Left cardiac atrium (tissue), 4 donors: ENCODE measurements at regions of chr2 and their contacts with region 1.

Region 1: DNA sequence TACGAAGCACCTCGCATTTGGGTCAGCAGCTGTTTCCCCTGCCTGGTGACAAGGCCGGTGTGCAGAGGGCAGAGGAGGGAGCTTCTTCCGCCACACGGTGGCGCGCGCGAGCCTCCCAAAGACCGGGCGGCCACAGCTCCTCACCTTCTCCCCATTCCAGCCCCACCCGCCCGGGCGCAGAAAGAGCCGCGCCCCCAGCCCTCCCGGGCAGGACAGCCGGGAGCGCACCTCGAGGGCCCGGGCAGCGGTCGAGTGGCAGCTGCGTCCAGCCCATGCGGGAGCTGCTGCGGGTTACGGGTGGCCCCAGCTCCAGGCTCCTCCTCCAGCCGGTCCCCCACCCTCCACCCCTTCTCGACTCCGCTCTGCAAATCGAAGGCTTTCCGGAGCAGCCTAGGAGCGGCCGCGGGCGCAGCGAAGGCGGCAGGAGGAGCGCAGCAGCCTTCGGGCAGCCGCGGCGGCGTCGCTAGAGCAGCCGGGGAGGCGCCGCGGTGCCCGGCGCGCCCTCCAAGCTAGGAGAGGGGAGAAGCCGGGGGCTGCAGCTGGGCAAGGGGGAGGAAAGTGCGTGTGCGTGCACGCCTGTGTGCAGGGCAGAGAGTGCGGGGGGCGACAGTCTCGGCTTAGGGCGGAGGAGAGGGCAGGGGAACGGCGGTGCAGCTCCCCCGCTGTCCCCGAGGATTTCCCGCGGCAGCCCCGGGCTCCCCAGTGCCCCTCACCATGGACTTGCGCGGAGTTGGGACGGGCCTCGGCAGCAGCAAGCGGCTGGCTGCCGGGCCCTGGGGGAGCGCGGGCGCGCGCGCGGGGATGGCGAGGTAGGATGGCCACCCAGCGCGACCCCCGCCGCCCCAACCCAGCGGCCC is at the start of gene CCDC85A:
- DNase-seq: peak; percentile 85
- ATAC-seq: peak; percentile 95 to 96
- total RNA-seq, gene CCDC85A: 2.5 to 4.9 TPM

Region 2: DNA sequence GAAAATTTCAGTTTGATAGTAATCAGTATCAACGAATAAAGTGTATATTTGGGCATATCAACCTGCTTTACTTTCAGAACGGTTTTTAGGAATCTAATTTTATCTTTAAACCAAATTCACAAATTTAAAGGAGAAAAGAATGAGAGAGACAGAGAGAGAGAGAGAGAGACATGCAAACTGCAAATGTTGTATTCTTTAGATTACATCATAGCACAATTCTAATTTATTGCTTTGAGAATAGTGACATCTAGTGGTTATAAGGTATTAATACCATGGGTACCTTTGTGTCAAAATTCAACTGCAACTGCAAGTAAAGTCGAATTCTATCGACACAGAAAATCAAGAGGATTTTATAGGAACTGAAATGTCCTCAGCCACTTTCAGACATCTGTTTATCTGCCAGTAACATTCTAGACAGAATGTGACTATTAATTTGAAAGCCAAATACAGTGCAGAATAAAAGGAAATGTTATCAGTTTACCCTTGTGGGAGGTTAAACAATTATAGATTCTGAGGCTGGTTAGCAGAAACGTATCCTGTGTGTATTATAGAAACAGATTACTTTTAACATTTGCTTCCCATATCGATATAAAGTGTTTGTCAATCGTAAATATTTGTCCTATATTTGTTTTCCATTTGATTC is 1332.9 kb after region 1 on chr2:
- intact Hi-C with region 1: loop called (anchors 5 kb)
- DNase-seq: no peak
- ATAC-seq: peak in 1 of 2 donors; percentile 47